ENCODE measurements at regions of chr11 and their contacts with region 1.

Region 1: GRCh38 chr11:118659314-118659952 is 20.0 kb downstream of the TREH start:
- DNase-seq: peak; percentile 96
- ATAC-seq: peak; percentile 100
- H3K4me3 Mint-ChIP-seq: no peak overlapping the region
- H3K27ac Mint-ChIP-seq: no peak overlapping the region
- H3K4me1 Mint-ChIP-seq: no peaks in the 10 kb centered on the region
- H3K27me3 Mint-ChIP-seq: no peaks in the 10 kb centered on the region

Region 2: GRCh38 chr11:117064275-117064674 is 1595.2 kb before region 1 on chr11:
- CTCF ChIA-PET with region 1: no interaction called
- POLR2A ChIA-PET with region 1: no interaction called
- intact Hi-C with region 1: no loop called
- DNase-seq: no peak
- ATAC-seq: no peak
- H3K4me3 Mint-ChIP-seq: peak overlapping the region; percentile 26
- H3K27ac Mint-ChIP-seq: peak overlapping the region; percentile 28
- H3K4me1 Mint-ChIP-seq: peaks cover 63% of the 10 kb centered on the region
- H3K27me3 Mint-ChIP-seq: no peaks in the 10 kb centered on the region

Region 3: GRCh38 chr11:118359295-118359958 is 300.0 kb before region 1 on chr11 and contains the start of gene UBE4A:
- CTCF ChIA-PET with region 1: no interaction called
- POLR2A ChIA-PET with region 1: no interaction called
- intact Hi-C with region 1: no loop called
- DNase-seq: peak; percentile 99
- ATAC-seq: peak; percentile 96
- H3K4me3 Mint-ChIP-seq: peak within 1 kb of the TSS; percentile 100
- H3K27ac Mint-ChIP-seq: peak within 1 kb of the TSS; percentile 97
- H3K4me1 Mint-ChIP-seq: peaks cover 43% of the 10 kb centered on the region
- H3K27me3 Mint-ChIP-seq: no peaks in the 10 kb centered on the region
- total RNA-seq, gene UBE4A: 44.2 to 50.7 TPM

Region 4: GRCh38 chr11:118640332-118641154 is 18.9 kb before region 1 on chr11:
- CTCF ChIA-PET with region 1: interaction called, 12 read pairs
- POLR2A ChIA-PET with region 1: no interaction called
- intact Hi-C with region 1: no loop called
- DNase-seq: no peak
- ATAC-seq: no peak
- H3K4me3 Mint-ChIP-seq: no peak overlapping the region
- H3K27ac Mint-ChIP-seq: no peak overlapping the region
- H3K4me1 Mint-ChIP-seq: no peaks in the 10 kb centered on the region
- H3K27me3 Mint-ChIP-seq: no peaks in the 10 kb centered on the region

Region 5: GRCh38 chr11:118672846-118673245 is 13.4 kb after region 1 on chr11:
- CTCF ChIA-PET with region 1: interaction called, 11 read pairs
- POLR2A ChIA-PET with region 1: no interaction called
- intact Hi-C with region 1: no loop called
- DNase-seq: no peak
- ATAC-seq: no peak
- H3K4me3 Mint-ChIP-seq: no peak overlapping the region
- H3K27ac Mint-ChIP-seq: no peak overlapping the region
- H3K4me1 Mint-ChIP-seq: no peaks in the 10 kb centered on the region
- H3K27me3 Mint-ChIP-seq: peaks cover 8% of the 10 kb centered on the region

Region 6: GRCh38 chr11:118956094-118956846 is 296.8 kb after region 1 on chr11 and contains the start of gene UPK2:
- CTCF ChIA-PET with region 1: no interaction called
- POLR2A ChIA-PET with region 1: no interaction called
- intact Hi-C with region 1: loop called (anchors 1 kb)
- DNase-seq: peak; percentile 95
- ATAC-seq: peak; percentile 100
- H3K4me3 Mint-ChIP-seq: no peak within 1 kb of the TSS
- H3K27ac Mint-ChIP-seq: peak within 1 kb of the TSS; percentile 0
- H3K4me1 Mint-ChIP-seq: peaks cover 5% of the 10 kb centered on the region
- H3K27me3 Mint-ChIP-seq: no peaks in the 10 kb centered on the region
- total RNA-seq, gene UPK2: 0.19 to 0.32 TPM